ENCODE measurements at regions of chr1 and their contacts with region 1.

Region 1: GRCh38 chr1:212455803-212456528 is 23.2 kb downstream of the NENF start:
- DNase-seq: peak; percentile 84
- H3K4me3 Mint-ChIP-seq: no peak overlapping the region
- H3K27ac Mint-ChIP-seq: no peak overlapping the region
- H3K4me1 Mint-ChIP-seq: peaks cover 10% of the 10 kb centered on the region
- H3K27me3 Mint-ChIP-seq: no peaks in the 10 kb centered on the region

Region 2: GRCh38 chr1:211698161-211699026 is 757.6 kb before region 1 on chr1:
- CTCF ChIA-PET with region 1: interaction called, 13 read pairs
- POLR2A ChIA-PET with region 1: no interaction called
- DNase-seq: peak; percentile 85
- H3K4me3 Mint-ChIP-seq: peak overlapping the region; percentile 29
- H3K27ac Mint-ChIP-seq: peak overlapping the region; percentile 75
- H3K4me1 Mint-ChIP-seq: peaks cover 50% of the 10 kb centered on the region
- H3K27me3 Mint-ChIP-seq: peaks cover 13% of the 10 kb centered on the region

Region 3: DNA sequence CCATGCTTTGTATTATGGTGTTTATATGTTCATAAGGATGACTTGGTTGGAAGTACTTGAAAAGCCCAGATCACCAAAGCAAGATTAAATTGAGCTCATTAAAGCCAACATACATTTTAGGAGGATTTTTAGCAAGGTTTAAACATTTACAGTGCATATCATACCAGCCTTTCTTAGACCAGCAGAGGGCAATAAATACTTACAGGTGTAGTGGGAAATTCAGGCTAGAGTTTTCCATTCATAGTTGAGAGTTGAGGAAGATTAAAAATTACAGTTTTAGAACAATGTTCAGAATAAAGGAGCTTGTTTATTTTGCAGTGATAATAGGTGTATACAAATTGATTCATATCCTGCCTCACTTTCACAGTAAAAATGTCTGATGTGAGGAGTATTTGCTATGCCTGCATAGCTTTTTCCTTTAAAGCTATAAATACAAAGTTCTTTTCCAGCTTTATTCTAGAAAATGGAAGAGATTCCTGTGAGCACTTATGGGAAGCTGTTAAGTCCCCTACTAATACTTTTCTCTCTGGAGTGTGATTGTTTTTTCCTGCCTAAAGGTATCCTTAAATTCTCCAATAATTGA is 385.2 kb before region 1 on chr1:
- CTCF ChIA-PET with region 1: interaction called, 13 read pairs
- POLR2A ChIA-PET with region 1: no interaction called
- DNase-seq: no peak
- H3K4me3 Mint-ChIP-seq: no peak overlapping the region
- H3K27ac Mint-ChIP-seq: no peak overlapping the region
- H3K4me1 Mint-ChIP-seq: no peaks in the 10 kb centered on the region
- H3K27me3 Mint-ChIP-seq: no peaks in the 10 kb centered on the region

Region 4: GRCh38 chr1:212440419-212440818 is 15.5 kb before region 1 on chr1:
- CTCF ChIA-PET with region 1: interaction called, 12 read pairs
- POLR2A ChIA-PET with region 1: no interaction called
- DNase-seq: no peak
- H3K4me3 Mint-ChIP-seq: no peak overlapping the region
- H3K27ac Mint-ChIP-seq: no peak overlapping the region
- H3K4me1 Mint-ChIP-seq: peaks cover 4% of the 10 kb centered on the region
- H3K27me3 Mint-ChIP-seq: no peaks in the 10 kb centered on the region

Region 5: GRCh38 chr1:212477014-212477679 is 21.2 kb after region 1 on chr1:
- CTCF ChIA-PET with region 1: interaction called, 35 read pairs
- POLR2A ChIA-PET with region 1: interaction called, 3 read pairs
- DNase-seq: peak; percentile 85
- H3K4me3 Mint-ChIP-seq: no peak overlapping the region
- H3K27ac Mint-ChIP-seq: peak overlapping the region; percentile 15
- H3K4me1 Mint-ChIP-seq: peaks cover 25% of the 10 kb centered on the region
- H3K27me3 Mint-ChIP-seq: peaks cover 25% of the 10 kb centered on the region

Region 6: DNA sequence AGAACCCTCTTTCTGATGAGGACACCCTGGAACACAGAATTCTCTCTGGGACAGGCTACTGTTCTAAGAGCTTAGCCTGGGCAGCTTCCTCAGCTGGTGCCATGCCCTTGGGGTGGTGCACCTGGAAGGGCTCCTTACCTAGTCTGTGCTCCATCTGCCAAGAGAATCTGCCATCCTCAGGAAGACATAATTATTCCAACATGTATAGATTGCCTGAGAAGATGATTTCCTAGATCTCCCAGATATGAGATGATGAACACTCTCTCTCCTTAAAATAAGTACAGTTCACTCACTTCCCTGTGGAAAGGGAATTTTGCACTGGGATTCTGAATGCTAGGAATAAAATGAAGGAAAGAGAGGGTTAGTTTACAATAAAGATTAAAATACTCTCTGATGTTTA is 64.3 kb after region 1 on chr1:
- CTCF ChIA-PET with region 1: no interaction called
- POLR2A ChIA-PET with region 1: no interaction called
- DNase-seq: no peak
- H3K4me3 Mint-ChIP-seq: no peak overlapping the region
- H3K27ac Mint-ChIP-seq: no peak overlapping the region
- H3K4me1 Mint-ChIP-seq: no peaks in the 10 kb centered on the region
- H3K27me3 Mint-ChIP-seq: peaks cover 36% of the 10 kb centered on the region